ENCODE measurements at regions of chr14 and their contacts with region 1.

Region 1: GRCh38 chr14:72049455-72049854 is 117.2 kb downstream of the RGS6 start:
- DNase-seq: no peak
- H3K4me3 ChIP-seq: no peak overlapping the region
- H3K27ac ChIP-seq: no peak overlapping the region
- H3K4me1 ChIP-seq: no peaks in the 10 kb centered on the region
- H3K27me3 ChIP-seq: no peaks in the 10 kb centered on the region
- CTCF ChIP-seq: no peak
- EP300 ChIP-seq: no peak
- POLR2A ChIP-seq: no peak

Region 2: DNA sequence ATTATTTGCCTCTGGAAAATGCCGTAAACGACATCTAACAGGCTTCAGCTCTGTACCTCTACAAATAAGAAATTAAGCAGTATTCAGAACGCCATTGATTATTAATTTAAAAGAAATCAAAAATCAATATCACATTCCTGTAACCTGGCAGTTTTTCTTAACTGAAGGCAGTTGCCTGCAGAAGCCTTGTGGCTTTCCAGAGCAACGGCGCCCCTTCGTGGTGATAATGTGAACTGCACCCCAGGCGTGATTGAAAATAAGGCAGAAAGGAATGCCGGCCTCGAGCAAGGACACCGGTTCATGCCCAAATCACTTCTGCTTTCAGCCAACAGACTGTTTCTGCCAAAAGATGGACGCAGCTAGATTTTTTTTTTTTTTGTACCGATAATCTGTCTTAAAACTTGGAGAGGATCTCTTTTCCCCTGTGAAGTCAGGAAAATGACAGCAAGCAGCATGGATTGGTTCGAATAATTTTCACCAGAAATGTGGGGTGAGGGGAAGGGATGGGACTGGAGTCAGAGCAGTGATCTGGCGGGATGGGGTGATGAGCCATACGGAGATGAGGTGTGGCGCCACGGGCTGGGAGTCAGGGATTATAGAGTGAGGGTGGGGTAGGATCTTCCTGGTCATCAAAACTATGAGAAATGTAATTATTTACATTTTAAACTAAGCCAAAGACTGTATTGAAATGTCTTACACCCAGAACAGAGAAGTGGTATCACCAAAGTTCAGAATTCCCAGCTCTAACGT is 371.4 kb after region 1 on chr14:
- in situ Hi-C with region 1: loop called in 1 of 4 experiments (anchors 25 kb)
- intact Hi-C with region 1: no loop called
- DNase-seq: peak; percentile 74
- H3K4me3 ChIP-seq: no peak overlapping the region
- H3K27ac ChIP-seq: no peak overlapping the region
- H3K4me1 ChIP-seq: no peaks in the 10 kb centered on the region
- H3K27me3 ChIP-seq: no peaks in the 10 kb centered on the region
- CTCF ChIP-seq: peak; percentile 75 to 95 (median 87)
- EP300 ChIP-seq: no peak
- POLR2A ChIP-seq: no peak